ENCODE measurements at regions of chr16 and their contacts with region 1.

Region 1: DNA sequence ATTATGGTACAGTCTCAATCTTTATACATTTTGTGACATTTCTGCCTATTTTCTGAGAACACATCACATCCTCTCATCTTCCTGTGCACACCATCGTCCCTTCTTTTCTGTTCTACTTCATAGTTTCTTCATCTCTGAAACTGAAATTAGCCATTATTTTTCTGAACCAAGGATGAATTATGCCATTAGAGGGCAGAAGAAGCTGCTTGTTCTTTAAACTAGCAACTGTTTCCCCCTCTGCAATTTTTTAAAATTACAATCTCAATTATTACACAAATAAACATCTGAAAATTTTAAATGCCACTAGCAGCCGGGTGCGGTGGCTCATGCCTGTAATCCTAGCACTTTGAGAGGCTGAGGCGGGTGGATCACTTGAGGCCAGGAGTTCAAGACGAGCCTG is 41.3 kb downstream of the RBBP6 start:
- DNase-seq: peak; percentile 41
- H3K4me3 ChIP-seq: no peak overlapping the region
- H3K27ac ChIP-seq: no peak overlapping the region
- H3K4me1 ChIP-seq: no peaks in the 10 kb centered on the region; a peak in 1 of 4 replicates
- H3K27me3 ChIP-seq: no peaks in the 10 kb centered on the region
- CTCF ChIP-seq: peak; percentile 69
- EP300 ChIP-seq: no peak
- RAD21 ChIP-seq: peak; percentile 76

Region 2: GRCh38 chr16:24568392-24568791 is 12.3 kb before region 1 on chr16:
- CTCF ChIA-PET with region 1: interaction called, 11 read pairs
- POLR2A ChIA-PET with region 1: no interaction called
- DNase-seq: peak; percentile 25
- H3K4me3 ChIP-seq: no peak overlapping the region
- H3K27ac ChIP-seq: no peak overlapping the region
- H3K4me1 ChIP-seq: no peaks in the 10 kb centered on the region; a peak in 1 of 4 replicates
- H3K27me3 ChIP-seq: no peaks in the 10 kb centered on the region
- CTCF ChIP-seq: peak; percentile 71
- EP300 ChIP-seq: no peak
- RAD21 ChIP-seq: peak; percentile 64

Region 3: DNA sequence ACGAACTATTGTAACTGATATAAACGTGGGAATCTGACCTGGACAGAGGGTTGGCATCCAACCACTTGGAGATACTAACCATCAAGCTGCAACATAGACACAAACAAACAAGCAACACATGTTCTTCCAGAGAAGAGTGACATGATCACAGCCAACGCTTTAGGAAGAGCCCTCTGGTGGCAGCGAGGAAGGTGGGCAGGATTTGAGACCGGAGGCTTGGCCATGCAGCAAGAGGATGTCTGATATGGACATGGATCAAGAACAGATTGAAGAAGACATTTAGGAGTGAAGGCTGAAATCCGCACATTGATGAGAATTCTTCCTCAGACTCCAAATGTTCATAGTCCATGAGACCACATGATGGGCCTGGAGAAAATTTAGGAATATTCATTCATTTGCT is 108.5 kb after region 1 on chr16:
- CTCF ChIA-PET with region 1: interaction called, 40 read pairs
- POLR2A ChIA-PET with region 1: no interaction called
- DNase-seq: peak; percentile 64
- H3K4me3 ChIP-seq: no peak overlapping the region
- H3K27ac ChIP-seq: no peak overlapping the region
- H3K4me1 ChIP-seq: peaks cover 10 to 20% of the 10 kb centered on the region in 2 experiments
- H3K27me3 ChIP-seq: no peaks in the 10 kb centered on the region
- CTCF ChIP-seq: peak; percentile 67
- EP300 ChIP-seq: no peak
- RAD21 ChIP-seq: peak; percentile 78